T-cell (primary cell): ENCODE measurements at regions of chr7 and their contacts with region 1.

Region 1: DNA sequence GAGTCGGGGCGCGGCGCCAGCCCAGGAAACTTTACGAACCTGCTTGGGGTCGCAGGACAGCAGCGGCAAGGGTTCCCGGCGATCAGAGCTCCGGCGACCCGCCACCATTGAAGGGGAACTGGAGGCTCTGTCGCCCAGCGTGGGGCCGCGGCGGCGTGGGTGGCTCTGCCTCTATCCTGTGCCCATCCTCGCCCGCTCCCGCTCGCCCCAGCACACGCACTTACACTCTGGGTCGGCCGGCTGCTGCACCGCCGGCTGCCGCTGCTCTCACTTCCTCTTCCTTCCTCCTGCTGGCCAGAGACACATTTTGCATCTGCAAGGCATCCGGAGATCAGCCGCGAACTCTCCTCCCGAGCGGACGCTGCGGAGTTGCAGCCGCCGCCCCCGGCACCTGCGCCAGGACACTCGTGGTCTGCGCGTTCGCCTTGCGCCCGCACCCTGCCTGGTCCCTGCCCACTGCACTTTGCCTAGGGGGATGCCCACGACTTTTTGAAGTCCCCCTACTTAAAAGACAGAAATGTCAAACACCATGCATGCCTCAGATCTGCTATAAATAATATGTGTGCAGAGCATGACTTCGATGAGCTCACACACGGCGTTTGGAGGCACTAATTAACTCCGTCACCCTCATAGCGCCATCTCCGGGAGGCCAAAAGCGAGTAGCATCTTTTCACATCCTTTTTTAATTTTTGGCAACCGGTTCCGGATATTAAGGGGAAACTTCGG is at the start of gene ELMO1:
- DNase-seq: peak; percentile 65 to 89 (median 76)
- ATAC-seq: peak; percentile 82 to 88 (median 84)
- H3K4me3 ChIP-seq: peak within 1 kb of the TSS; percentile 83 to 96
- H3K4me3 Mint-ChIP-seq: peak within 1 kb of the TSS; percentile 93 to 94 (median 93)
- H3K27ac ChIP-seq: peak within 1 kb of the TSS; percentile 90
- H3K27ac Mint-ChIP-seq: peak within 1 kb of the TSS; percentile 97 to 98
- H3K4me1 ChIP-seq: peaks cover 25 to 34% of the 10 kb centered on the region in 2 experiments
- H3K4me1 Mint-ChIP-seq: peaks cover 51 to 64% (median 55%) of the 10 kb centered on the region in 3 donors
- H3K27me3 ChIP-seq: no peaks in the 10 kb centered on the region
- H3K27me3 Mint-ChIP-seq: peaks cover 0 to 1% of the 10 kb centered on the region in 2 donors
- total RNA-seq, gene ELMO1: 101 to 149 (median 113) TPM

Region 2: GRCh38 chr7:35866186-35866585 is 1582.6 kb before region 1 on chr7:
- CTCF ChIA-PET with region 1: no interaction called
- POLR2A ChIA-PET with region 1: interaction called in 1 of 2 experiments, 12 read pairs
- DNase-seq: no peak
- ATAC-seq: no peak
- H3K4me3 ChIP-seq: no peak overlapping the region
- H3K4me3 Mint-ChIP-seq: no peak overlapping the region
- H3K27ac ChIP-seq: no peak overlapping the region
- H3K27ac Mint-ChIP-seq: peak overlapping the region in 1 of 2 donors; percentile 9
- H3K4me1 ChIP-seq: peaks cover 0 to 2% of the 10 kb centered on the region in 2 experiments
- H3K4me1 Mint-ChIP-seq: peaks cover 32 to 43% (median 40%) of the 10 kb centered on the region in 3 donors
- H3K27me3 ChIP-seq: no peaks in the 10 kb centered on the region
- H3K27me3 Mint-ChIP-seq: no peaks in the 10 kb centered on the region